ENCODE measurements at regions of chr3 and their contacts with region 1.

Region 1: DNA sequence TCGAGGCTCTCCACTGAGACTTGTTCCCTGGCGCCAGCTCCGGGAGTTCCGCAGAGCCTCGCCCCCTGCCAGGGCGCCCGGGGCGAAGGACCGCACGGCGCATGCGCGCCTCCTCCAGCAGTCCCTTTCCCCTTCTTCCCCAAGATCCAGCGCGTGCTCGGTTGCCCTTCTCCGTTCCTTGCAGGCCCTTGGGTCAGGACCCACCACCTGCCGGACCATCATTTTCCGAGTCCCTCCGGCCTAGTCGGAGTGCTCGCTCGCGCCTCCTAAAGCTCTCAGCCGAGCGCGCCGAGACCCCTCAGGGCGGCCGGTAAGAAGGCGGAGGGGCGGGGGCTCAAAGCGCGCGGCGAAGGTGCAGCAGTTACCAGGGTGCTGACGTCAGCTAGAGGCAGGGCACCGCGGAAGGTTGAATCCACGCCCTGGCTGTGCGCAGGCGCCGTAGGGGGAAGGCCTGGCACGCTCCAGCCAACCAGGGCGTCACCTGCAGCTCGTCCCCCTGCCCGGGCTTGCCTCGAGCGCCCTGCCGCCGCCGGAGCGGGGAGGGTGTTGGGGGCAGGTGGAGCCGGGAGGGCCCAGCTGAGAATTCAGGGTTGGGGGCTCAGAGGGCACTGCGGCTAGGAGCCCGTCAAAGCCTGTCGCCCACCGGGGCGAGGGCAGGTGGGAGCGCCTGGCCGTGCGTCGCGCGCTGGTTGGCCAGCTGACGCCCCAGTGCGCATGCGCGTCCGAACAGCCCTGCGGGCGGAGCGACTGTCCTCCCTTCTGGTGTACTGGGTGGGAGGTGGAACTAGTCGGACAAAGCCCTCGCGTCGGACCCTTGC is at the start of gene TCAIM:
- DNase-seq: peak; percentile 99
- H3K4me3 Mint-ChIP-seq: peak within 1 kb of the TSS; percentile 100
- H3K27ac Mint-ChIP-seq: peak within 1 kb of the TSS; percentile 98
- H3K4me1 Mint-ChIP-seq: peaks cover 19% of the 10 kb centered on the region
- H3K27me3 Mint-ChIP-seq: peaks cover 10% of the 10 kb centered on the region
- total RNA-seq, gene TCAIM: 14.3 and 14.6 TPM in 2 replicates

Region 2: GRCh38 chr3:44439499-44440295 is 101.5 kb after region 1 on chr3:
- intact Hi-C with region 1: loop called (anchors 1 kb)
- DNase-seq: peak; percentile 90
- H3K4me3 Mint-ChIP-seq: peak overlapping the region; percentile 66
- H3K27ac Mint-ChIP-seq: peak overlapping the region; percentile 85
- H3K4me1 Mint-ChIP-seq: peaks cover 38% of the 10 kb centered on the region
- H3K27me3 Mint-ChIP-seq: no peaks in the 10 kb centered on the region

Region 3: GRCh38 chr3:44510000-44510368 is 171.8 kb after region 1 on chr3:
- intact Hi-C with region 1: loop called (anchors 1 kb)
- DNase-seq: no peak
- H3K4me3 Mint-ChIP-seq: peak overlapping the region; percentile 88
- H3K27ac Mint-ChIP-seq: peak overlapping the region; percentile 79
- H3K4me1 Mint-ChIP-seq: peaks cover 24% of the 10 kb centered on the region
- H3K27me3 Mint-ChIP-seq: no peaks in the 10 kb centered on the region

Region 4: GRCh38 chr3:44861412-44862220 is 523.4 kb after region 1 on chr3 and contains the start of gene TMEM42:
- intact Hi-C with region 1: loop called (anchors 5 kb)
- DNase-seq: peak; percentile 97
- H3K4me3 Mint-ChIP-seq: peak within 1 kb of the TSS; percentile 90
- H3K27ac Mint-ChIP-seq: peak within 1 kb of the TSS; percentile 91
- H3K4me1 Mint-ChIP-seq: peaks cover 32% of the 10 kb centered on the region
- H3K27me3 Mint-ChIP-seq: no peaks in the 10 kb centered on the region
- total RNA-seq, gene TMEM42: 11.6 and 13.0 TPM in 2 replicates